PC-9 (cell line): ENCODE measurements at regions of chr13 and their contacts with region 1.

Region 1: GRCh38 chr13:77492982-77493381 is 42.5 kb upstream of the SCEL start:
- DNase-seq: peak; percentile 21 to 66
- H3K4me3 ChIP-seq: no peak overlapping the region
- H3K27ac ChIP-seq: no peak overlapping the region
- H3K4me1 ChIP-seq: peaks cover 4% of the 10 kb centered on the region; the same call in 1 of the 2 replicates
- H3K27me3 ChIP-seq: no peaks in the 10 kb centered on the region
- CTCF ChIP-seq: peak; percentile 78

Region 2: GRCh38 chr13:77521595-77522367 is 28.8 kb after region 1 on chr13:
- CTCF ChIA-PET with region 1: interaction called, 6 read pairs
- POLR2A ChIA-PET with region 1: no interaction called
- intact Hi-C with region 1: loop called (anchors 1 kb)
- DNase-seq: peak; percentile 86 to 98
- H3K4me3 ChIP-seq: peak overlapping the region; percentile 35; the same call in 1 of the 2 replicates
- H3K27ac ChIP-seq: peak overlapping the region; percentile 97
- H3K4me1 ChIP-seq: peaks cover 59% of the 10 kb centered on the region
- H3K27me3 ChIP-seq: no peaks in the 10 kb centered on the region
- CTCF ChIP-seq: peak; percentile 22; the same call in 1 of the 2 replicates

Region 3: DNA sequence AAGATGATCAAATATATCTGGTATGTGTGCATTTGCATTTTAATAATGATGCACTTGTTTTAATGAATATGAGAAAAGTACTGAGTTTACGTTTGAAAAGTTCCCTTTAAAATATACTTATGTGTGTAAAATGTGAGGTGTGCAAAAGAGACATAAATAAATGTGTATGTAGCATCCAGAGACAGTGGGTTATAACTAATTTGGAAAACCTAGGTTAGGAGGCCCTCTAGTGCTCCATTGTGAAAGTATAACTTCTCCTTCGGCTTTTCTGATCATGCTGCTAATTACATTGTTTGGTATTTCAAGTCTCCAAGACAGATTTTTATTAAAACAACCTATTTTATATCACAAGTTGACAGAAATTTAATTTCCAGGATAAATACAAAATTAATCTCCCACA is 72.7 kb after region 1 on chr13:
- CTCF ChIA-PET with region 1: interaction called, 12 read pairs
- POLR2A ChIA-PET with region 1: no interaction called
- intact Hi-C with region 1: loop called (anchors 1 kb)
- DNase-seq: peak in 1 of 2 experiments; percentile 50
- H3K4me3 ChIP-seq: no peak overlapping the region
- H3K27ac ChIP-seq: no peak overlapping the region
- H3K4me1 ChIP-seq: no peaks in the 10 kb centered on the region; the same call in 1 of the 2 replicates
- H3K27me3 ChIP-seq: no peaks in the 10 kb centered on the region
- CTCF ChIP-seq: peak; percentile 81

Region 4: DNA sequence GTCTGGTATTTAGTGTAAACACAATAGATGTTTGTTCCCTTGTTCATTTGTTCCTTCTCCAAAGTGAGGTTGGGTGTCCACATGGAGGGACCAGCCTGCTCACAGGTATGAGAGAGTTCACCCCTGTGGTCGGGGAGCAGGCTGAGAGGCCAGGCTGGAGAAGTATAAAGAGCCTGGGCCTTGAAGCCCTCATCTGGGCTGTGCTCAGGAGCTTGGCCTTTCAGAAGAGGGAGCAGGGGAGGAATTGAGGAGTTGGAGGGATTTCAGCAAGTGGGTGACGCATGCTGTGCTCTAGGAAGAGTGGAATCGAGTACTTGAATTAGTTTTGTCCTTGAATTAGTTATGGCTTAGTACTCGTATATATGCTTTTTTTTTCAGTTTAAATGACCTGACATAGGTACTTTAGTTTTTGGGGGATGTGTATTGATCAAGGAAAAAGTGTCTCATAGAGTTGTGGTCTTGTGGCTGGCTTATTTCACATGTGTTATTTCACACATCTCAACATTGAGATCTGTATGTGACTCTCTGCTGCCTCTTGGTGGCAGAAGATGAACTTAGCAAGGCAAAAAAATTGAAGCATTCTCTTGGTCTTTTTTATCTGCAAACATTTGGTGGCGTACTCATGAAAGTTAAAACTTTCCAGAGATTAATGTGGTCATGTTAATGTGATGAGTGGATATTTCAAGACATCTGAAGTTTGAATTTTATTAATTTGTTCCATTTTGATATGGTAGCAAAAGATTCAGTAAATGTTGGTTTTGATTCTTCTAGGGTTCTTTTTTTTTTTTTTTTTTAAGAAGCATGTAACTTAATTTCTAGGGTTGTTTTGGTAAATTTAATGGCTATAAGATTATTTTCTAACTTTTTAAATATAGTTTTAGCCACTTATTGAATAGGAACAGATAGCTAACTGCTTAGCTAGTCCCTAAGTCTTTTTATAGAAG is 258.8 kb after region 1 on chr13:
- CTCF ChIA-PET with region 1: no interaction called
- POLR2A ChIA-PET with region 1: no interaction called
- intact Hi-C with region 1: loop called (anchors 5 kb)
- DNase-seq: peak; percentile 23 to 43
- H3K4me3 ChIP-seq: no peak overlapping the region
- H3K27ac ChIP-seq: no peak overlapping the region
- H3K4me1 ChIP-seq: no peaks in the 10 kb centered on the region
- H3K27me3 ChIP-seq: no peaks in the 10 kb centered on the region
- CTCF ChIP-seq: peak; percentile 85